A549 (cell line): ENCODE measurements at regions of chr19 and their contacts with region 1.

Region 1: DNA sequence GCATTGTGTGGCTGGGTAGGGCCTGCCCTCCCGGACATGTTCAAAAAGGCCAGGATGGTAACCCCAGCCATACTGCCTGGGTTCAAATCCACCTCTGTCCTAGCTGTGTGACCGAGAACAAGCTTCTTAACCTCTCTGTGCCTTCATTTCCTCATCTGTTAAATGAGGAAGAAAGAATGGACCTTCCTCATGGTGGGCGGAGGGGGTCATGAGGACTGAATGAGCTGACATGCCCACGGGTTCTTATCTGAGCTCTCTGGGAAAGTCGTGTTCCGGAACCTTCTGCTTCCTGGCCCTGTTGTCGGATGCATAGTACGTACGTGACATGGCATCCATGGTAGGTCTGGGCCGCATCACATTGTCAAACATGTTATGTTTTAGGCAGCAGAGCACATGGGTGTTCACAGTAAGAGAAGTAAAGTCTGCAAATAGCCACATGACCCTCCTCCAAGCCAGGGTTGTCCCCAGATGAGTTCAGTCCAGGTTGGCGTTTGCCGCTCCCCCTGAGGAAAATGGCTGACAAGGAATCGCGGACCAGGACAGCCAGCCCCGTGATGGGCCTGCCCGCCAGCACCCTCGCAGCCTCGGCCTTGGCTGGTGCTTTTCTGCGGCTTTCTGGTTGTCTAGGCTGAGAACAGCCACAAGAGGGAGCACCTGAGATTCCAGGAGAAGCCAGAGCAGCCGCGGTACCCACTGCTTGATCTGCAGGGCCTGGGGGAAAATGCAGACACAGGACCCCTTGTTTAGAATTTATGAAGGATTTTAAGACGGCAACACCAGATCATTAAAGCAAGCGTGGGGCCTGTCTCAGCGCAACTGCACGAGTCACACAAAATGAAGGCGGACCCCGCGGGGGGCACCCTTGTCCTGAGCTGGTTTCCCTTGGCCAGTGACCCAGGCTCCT is 2.4 kb upstream of the NTN5 start:
- DNase-seq: peak; percentile 90 to 98
- ATAC-seq: peak; percentile 80 to 95
- H3K4me3 ChIP-seq: no peak overlapping the region
- H3K27ac ChIP-seq: peak overlapping the region; percentile 38 to 65; a peak in 5 of 6 replicates
- H3K4me1 ChIP-seq: peaks cover 5% of the 10 kb centered on the region; the same call in 1 of the 3 replicates
- CTCF ChIP-seq: peak; percentile 95
- EP300 ChIP-seq: no peak
- POLR2A ChIP-seq: no peak
- RAD21 ChIP-seq: peak; percentile 78 to 81

Region 2: GRCh38 chr19:48391107-48391986 is 283.8 kb before region 1 on chr19 and contains the start of gene KDELR1:
- CTCF ChIA-PET with region 1: no interaction called
- POLR2A ChIA-PET with region 1: no interaction called
- DNase-seq: peak; percentile 77 to 78
- ATAC-seq: peak; percentile 54 to 72
- H3K4me3 ChIP-seq: peak within 1 kb of the TSS; percentile 97
- H3K27ac ChIP-seq: peak within 1 kb of the TSS; percentile 95 to 97
- H3K4me1 ChIP-seq: peaks cover 54% of the 10 kb centered on the region
- CTCF ChIP-seq: peak; percentile 90
- EP300 ChIP-seq: no peak
- POLR2A ChIP-seq: peak; percentile 72
- RAD21 ChIP-seq: peak; percentile 31 to 47; a peak in 4 of 5 replicates
- polyA plus RNA-seq, gene KDELR1: 200 and 270 TPM in 2 replicates

Region 3: GRCh38 chr19:48654299-48655059 is 20.7 kb before region 1 on chr19:
- CTCF ChIA-PET with region 1: interaction called, 29 read pairs
- POLR2A ChIA-PET with region 1: interaction called, 3 read pairs
- DNase-seq: no peak
- ATAC-seq: no peak
- H3K4me3 ChIP-seq: no peak overlapping the region
- H3K27ac ChIP-seq: 0 out of 6 replicates have a peak overlapping the region, but pooled peaks of 1 of the 2 experiments have one; percentile 5
- H3K4me1 ChIP-seq: no peaks in the 10 kb centered on the region
- CTCF ChIP-seq: no peak
- EP300 ChIP-seq: no peak
- POLR2A ChIP-seq: no peak
- RAD21 ChIP-seq: no peak

Region 4: GRCh38 chr19:48698046-48698445 is 22.9 kb after region 1 on chr19:
- CTCF ChIA-PET with region 1: interaction called, 151 read pairs
- POLR2A ChIA-PET with region 1: no interaction called
- DNase-seq: no peak
- ATAC-seq: no peak; a peak in 1 of 6 replicates
- H3K4me3 ChIP-seq: no peak overlapping the region
- H3K27ac ChIP-seq: 0 out of 6 replicates have a peak overlapping the region, but pooled peaks of 1 of the 2 experiments have one; percentile 2
- H3K4me1 ChIP-seq: peaks cover 3% of the 10 kb centered on the region; the same call in 2 of the 3 replicates
- CTCF ChIP-seq: no peak
- EP300 ChIP-seq: no peak
- POLR2A ChIP-seq: no peak
- RAD21 ChIP-seq: no peak

Region 5: DNA sequence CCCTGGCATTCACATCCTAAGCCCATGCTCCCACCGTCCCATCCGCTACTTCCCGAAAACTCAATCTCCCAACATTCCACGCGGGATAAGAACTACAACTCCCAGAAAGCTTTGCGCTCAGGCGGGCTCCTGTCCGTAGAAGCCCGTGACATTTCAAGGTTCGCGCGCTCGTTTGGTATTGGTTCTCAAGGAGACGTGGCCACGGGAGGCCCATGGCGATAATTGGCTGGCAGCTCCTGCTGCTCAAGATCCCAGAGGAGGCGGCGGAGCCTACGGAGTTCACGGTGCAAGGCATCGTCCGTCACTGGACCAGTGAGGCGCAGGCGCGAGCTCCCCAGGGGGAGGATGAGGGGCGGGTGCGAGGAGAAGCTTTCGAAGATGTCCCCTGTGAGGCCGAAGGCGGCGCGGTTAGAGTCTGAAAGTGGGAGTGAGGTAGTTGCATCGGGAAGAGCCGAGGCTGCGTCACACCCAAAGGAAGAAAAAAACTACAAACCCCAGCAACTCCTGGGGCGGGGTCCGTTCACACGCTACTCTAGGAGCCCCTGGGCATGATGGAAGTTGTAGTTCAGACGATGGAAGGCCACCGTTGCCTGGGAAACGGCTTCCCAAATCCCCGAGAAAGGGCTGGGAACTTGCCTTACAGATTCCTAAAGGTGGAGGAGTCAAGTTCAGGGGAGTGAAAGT is 45.6 kb after region 1 on chr19:
- CTCF ChIA-PET with region 1: interaction called, 23 read pairs
- POLR2A ChIA-PET with region 1: no interaction called
- DNase-seq: peak; percentile 100
- ATAC-seq: peak; percentile 92 to 95
- H3K4me3 ChIP-seq: peak overlapping the region; percentile 53
- H3K27ac ChIP-seq: peak overlapping the region; percentile 81 to 88
- H3K4me1 ChIP-seq: peaks cover 13% of the 10 kb centered on the region
- CTCF ChIP-seq: no peak
- EP300 ChIP-seq: no peak
- POLR2A ChIP-seq: peak; percentile 24; the same call in 1 of the 2 replicates
- RAD21 ChIP-seq: no peak

Region 6: DNA sequence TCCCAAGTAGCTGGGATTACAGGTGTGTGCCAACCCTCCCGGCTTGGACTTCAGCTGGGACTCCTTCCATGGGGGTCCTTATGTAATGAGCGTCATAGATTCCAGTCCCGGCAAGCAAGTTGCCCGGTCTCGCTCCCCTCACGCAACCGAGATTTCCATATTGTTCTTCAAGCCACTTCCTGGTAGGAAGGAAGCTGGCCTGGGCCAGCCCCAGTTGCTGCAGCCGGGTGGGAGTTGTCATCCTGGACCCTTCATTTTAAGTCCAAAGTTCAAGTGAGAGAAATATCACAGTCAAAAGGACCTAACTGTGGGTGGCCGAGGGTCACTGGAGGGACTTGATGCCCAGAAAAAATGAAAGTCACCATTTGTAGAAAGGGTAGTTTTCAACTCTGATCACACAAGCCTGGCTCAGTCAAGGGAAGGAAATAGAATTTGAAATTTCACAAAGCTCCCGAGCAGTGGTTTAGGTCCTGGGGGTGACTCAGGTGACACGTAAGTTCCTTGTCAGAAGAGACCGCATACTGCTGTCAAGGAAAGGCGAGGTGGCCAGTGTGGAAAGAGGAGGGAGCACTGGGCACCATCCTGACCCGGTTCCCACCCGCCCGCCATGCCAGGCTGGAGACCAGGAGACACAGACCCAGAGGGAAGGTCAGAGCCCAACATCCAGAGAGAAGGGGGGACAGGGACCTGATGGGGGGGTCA is 85.5 kb after region 1 on chr19:
- CTCF ChIA-PET with region 1: interaction called, 11 read pairs
- POLR2A ChIA-PET with region 1: no interaction called
- DNase-seq: no peak
- ATAC-seq: peak in 1 of 2 experiments; percentile 36; a peak in 2 of 6 replicates
- H3K4me3 ChIP-seq: no peak overlapping the region
- H3K27ac ChIP-seq: peak overlapping the region in 1 of 2 experiments; percentile 35; a peak in 1 of 6 replicates
- H3K4me1 ChIP-seq: peaks cover 11% of the 10 kb centered on the region; the same call in 2 of the 3 replicates
- CTCF ChIP-seq: no peak
- EP300 ChIP-seq: no peak
- POLR2A ChIP-seq: no peak
- RAD21 ChIP-seq: no peak